Ascending aorta (tissue), 2 donors: ENCODE measurements at regions of chr13 and their contacts with region 1.

Region 1: DNA sequence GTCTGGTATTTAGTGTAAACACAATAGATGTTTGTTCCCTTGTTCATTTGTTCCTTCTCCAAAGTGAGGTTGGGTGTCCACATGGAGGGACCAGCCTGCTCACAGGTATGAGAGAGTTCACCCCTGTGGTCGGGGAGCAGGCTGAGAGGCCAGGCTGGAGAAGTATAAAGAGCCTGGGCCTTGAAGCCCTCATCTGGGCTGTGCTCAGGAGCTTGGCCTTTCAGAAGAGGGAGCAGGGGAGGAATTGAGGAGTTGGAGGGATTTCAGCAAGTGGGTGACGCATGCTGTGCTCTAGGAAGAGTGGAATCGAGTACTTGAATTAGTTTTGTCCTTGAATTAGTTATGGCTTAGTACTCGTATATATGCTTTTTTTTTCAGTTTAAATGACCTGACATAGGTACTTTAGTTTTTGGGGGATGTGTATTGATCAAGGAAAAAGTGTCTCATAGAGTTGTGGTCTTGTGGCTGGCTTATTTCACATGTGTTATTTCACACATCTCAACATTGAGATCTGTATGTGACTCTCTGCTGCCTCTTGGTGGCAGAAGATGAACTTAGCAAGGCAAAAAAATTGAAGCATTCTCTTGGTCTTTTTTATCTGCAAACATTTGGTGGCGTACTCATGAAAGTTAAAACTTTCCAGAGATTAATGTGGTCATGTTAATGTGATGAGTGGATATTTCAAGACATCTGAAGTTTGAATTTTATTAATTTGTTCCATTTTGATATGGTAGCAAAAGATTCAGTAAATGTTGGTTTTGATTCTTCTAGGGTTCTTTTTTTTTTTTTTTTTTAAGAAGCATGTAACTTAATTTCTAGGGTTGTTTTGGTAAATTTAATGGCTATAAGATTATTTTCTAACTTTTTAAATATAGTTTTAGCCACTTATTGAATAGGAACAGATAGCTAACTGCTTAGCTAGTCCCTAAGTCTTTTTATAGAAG is 54.3 kb downstream of the SLAIN1 start:
- DNase-seq: no peak
- H3K4me3 ChIP-seq: no peak overlapping the region
- H3K27ac ChIP-seq: no peak overlapping the region
- H3K4me1 ChIP-seq: no peaks in the 10 kb centered on the region
- H3K27me3 ChIP-seq: no peaks in the 10 kb centered on the region
- CTCF ChIP-seq: peak; percentile 36 to 81 (median 63)

Region 2: DNA sequence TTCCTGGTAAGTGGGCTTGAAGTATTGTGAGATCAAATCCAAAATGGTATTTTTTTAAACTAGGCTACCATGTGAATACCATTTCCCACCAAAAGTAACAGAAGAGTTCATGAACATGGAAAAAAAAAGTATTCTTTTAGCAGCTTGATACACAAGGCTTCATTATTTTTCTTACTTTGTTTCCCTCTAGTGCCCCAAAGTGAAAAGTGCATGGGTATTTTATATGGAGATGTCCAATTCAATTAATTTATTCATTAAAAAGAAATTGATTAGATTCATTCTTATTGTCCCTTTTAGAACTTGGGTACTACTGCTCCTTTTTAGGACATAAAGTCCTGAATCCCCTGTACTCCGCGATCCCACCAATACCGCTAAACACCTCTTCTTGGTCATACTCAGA is 244.9 kb before region 1 on chr13:
- intact Hi-C with region 1: loop called (anchors 10 kb)
- DNase-seq: no peak
- H3K4me3 ChIP-seq: no peak overlapping the region
- H3K27ac ChIP-seq: no peak overlapping the region
- H3K4me1 ChIP-seq: peaks cover 0 to 8% of the 10 kb centered on the region in 2 donors
- H3K27me3 ChIP-seq: no peaks in the 10 kb centered on the region
- CTCF ChIP-seq: peak in 1 of 3 experiments; percentile 17

Region 3: DNA sequence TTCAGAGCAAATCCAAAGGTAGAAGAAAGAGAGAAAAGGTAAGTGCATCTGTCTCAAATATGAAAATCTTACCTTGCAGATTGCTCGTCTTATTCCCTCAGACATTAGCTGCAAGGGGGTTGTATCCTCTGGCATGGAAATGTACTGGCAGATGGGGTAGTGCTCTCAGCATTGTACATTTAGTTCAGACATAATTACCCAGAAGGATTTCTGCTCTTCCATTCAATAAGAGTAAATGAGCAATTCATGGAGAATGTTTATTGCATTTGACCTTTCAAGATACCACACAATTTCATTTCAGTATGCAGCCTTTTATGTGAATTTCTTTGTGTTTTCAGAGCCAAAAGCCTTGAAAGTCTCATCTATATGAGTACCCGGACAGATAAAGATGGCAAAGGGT is 152.4 kb before region 1 on chr13:
- intact Hi-C with region 1: loop called (anchors 10 kb)
- DNase-seq: no peak
- H3K4me3 ChIP-seq: no peak overlapping the region
- H3K27ac ChIP-seq: no peak overlapping the region
- H3K4me1 ChIP-seq: no peaks in the 10 kb centered on the region
- H3K27me3 ChIP-seq: no peaks in the 10 kb centered on the region
- CTCF ChIP-seq: no peak